HCT116 (cell line): ENCODE measurements at regions of chr2 and their contacts with region 1.

Region 1: DNA sequence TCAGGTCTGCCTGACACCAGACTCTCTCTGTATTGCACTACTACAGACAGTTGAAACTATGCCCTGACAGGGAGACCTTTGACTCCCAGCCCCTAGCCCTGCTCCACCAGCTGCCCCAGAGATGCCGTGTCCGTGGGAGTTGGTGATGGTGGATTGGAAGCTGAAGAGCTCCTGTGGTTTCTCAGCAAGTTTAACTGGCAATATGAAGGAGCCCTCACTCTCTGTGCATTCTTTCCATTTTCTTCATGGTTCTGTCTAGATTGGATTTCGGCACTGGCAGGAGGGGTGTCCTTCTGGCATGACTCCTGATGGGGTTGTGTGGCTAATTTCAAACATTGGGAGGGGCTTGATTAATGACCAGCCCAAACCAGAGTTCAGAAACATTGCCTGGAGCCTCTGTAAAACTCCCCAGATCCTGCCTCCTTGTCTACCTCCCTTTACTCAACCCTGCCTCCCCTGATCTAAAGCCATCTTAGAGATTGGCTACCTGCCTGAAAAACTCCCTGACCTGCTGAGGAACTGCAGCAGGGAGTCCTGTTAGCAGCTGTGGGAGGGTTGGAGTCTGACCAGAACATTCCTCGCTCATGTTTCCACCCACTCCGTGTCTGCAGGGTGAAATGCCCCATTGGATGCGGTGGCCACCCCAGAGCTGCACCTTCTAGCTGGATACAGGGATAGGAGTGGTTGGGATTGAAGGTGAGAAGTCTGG is 206.9 kb upstream of the SPRED2 start:
- DNase-seq: no peak
- ATAC-seq: no peak
- H3K4me3 ChIP-seq: peak overlapping the region in 1 of 2 experiments; percentile 60; a peak in 2 of 4 replicates
- H3K27ac ChIP-seq: no peak overlapping the region
- H3K4me1 ChIP-seq: peaks cover 5 to 15% of the 10 kb centered on the region in 2 experiments; a peak in 3 of 4 replicates
- H3K27me3 ChIP-seq: no peaks in the 10 kb centered on the region
- CTCF ChIP-seq: no peak
- POLR2A ChIP-seq: no peak
- RAD21 ChIP-seq: no peak

Region 2: GRCh38 chr2:65710779-65711295 is 71.5 kb after region 1 on chr2:
- CTCF ChIA-PET with region 1: interaction called, 20 read pairs
- POLR2A ChIA-PET with region 1: no interaction called
- RAD21 ChIA-PET with region 1: no interaction called
- intact Hi-C with region 1: loop called (anchors 1 kb)
- DNase-seq: peak; percentile 48
- ATAC-seq: peak; percentile 90
- H3K4me3 ChIP-seq: no peak overlapping the region
- H3K27ac ChIP-seq: no peak overlapping the region
- H3K4me1 ChIP-seq: peaks cover 0 to 8% of the 10 kb centered on the region in 2 experiments; a peak in 3 of 4 replicates
- H3K27me3 ChIP-seq: peaks cover 30% of the 10 kb centered on the region
- CTCF ChIP-seq: peak; percentile 43 to 77 (median 69); a peak in 4 of 6 replicates
- POLR2A ChIP-seq: no peak
- RAD21 ChIP-seq: peak; percentile 47

Region 3: GRCh38 chr2:65800998-65801397 is 161.7 kb after region 1 on chr2:
- CTCF ChIA-PET with region 1: interaction called, 13 read pairs
- POLR2A ChIA-PET with region 1: no interaction called
- RAD21 ChIA-PET with region 1: no interaction called
- intact Hi-C with region 1: loop called (anchors 1 kb)
- DNase-seq: peak; percentile 28
- ATAC-seq: peak; percentile 82; the same call in 1 of the 2 replicates
- H3K4me3 ChIP-seq: no peak overlapping the region
- H3K27ac ChIP-seq: no peak overlapping the region
- H3K4me1 ChIP-seq: no peaks in the 10 kb centered on the region
- H3K27me3 ChIP-seq: peaks cover 12% of the 10 kb centered on the region; the same call in 1 of the 2 replicates
- CTCF ChIP-seq: peak; percentile 51 to 67 (median 61); a peak in 5 of 6 replicates
- POLR2A ChIP-seq: no peak
- RAD21 ChIP-seq: peak; percentile 42

Region 4: GRCh38 chr2:67322353-67323001 is 1683.2 kb after region 1 on chr2:
- CTCF ChIA-PET with region 1: no interaction called
- POLR2A ChIA-PET with region 1: no interaction called
- RAD21 ChIA-PET with region 1: no interaction called
- intact Hi-C with region 1: loop called (anchors 5 kb)
- DNase-seq: peak; percentile 47
- ATAC-seq: peak; percentile 95
- H3K4me3 ChIP-seq: no peak overlapping the region
- H3K27ac ChIP-seq: no peak overlapping the region
- H3K4me1 ChIP-seq: no peaks in the 10 kb centered on the region
- H3K27me3 ChIP-seq: peaks cover 18% of the 10 kb centered on the region; the same call in 1 of the 2 replicates
- CTCF ChIP-seq: peak; percentile 26 to 52 (median 50); a peak in 3 of 6 replicates
- POLR2A ChIP-seq: no peak
- RAD21 ChIP-seq: peak; percentile 70